ENCODE measurements at regions of chr4 and their contacts with region 1.

Region 1: GRCh38 chr4:184384056-184384809 is 90.1 kb downstream of the IRF2 start:
- DNase-seq: no peak
- ATAC-seq: peak; percentile 36
- H3K4me3 Mint-ChIP-seq: peak overlapping the region; percentile 72
- H3K27ac Mint-ChIP-seq: peak overlapping the region; percentile 79
- H3K4me1 Mint-ChIP-seq: peaks cover 88% of the 10 kb centered on the region
- H3K27me3 Mint-ChIP-seq: no peaks in the 10 kb centered on the region
- CTCF ChIP-seq: no peak

Region 2: GRCh38 chr4:183471946-183472708 is 912.1 kb before region 1 on chr4:
- CTCF ChIA-PET with region 1: no interaction called
- POLR2A ChIA-PET with region 1: no interaction called
- intact Hi-C with region 1: no loop called
- DNase-seq: peak; percentile 60
- ATAC-seq: peak; percentile 73
- H3K4me3 Mint-ChIP-seq: no peak overlapping the region
- H3K27ac Mint-ChIP-seq: no peak overlapping the region
- H3K4me1 Mint-ChIP-seq: peaks cover 2% of the 10 kb centered on the region
- H3K27me3 Mint-ChIP-seq: no peaks in the 10 kb centered on the region
- CTCF ChIP-seq: peak; percentile 67

Region 3: GRCh38 chr4:184364100-184364921 is 19.9 kb before region 1 on chr4:
- CTCF ChIA-PET with region 1: no interaction called
- POLR2A ChIA-PET with region 1: no interaction called
- intact Hi-C with region 1: loop called (anchors 2 kb)
- DNase-seq: no peak
- ATAC-seq: no peak
- H3K4me3 Mint-ChIP-seq: no peak overlapping the region
- H3K27ac Mint-ChIP-seq: no peak overlapping the region
- H3K4me1 Mint-ChIP-seq: peaks cover 26% of the 10 kb centered on the region
- H3K27me3 Mint-ChIP-seq: no peaks in the 10 kb centered on the region
- CTCF ChIP-seq: no peak

Region 4: GRCh38 chr4:184544788-184545409 is 160.7 kb after region 1 on chr4:
- CTCF ChIA-PET with region 1: no interaction called
- POLR2A ChIA-PET with region 1: no interaction called
- intact Hi-C with region 1: no loop called
- DNase-seq: no peak
- ATAC-seq: no peak
- H3K4me3 Mint-ChIP-seq: no peak overlapping the region
- H3K27ac Mint-ChIP-seq: no peak overlapping the region
- H3K4me1 Mint-ChIP-seq: peaks cover 17% of the 10 kb centered on the region
- H3K27me3 Mint-ChIP-seq: no peaks in the 10 kb centered on the region
- CTCF ChIP-seq: no peak

Region 5: GRCh38 chr4:185395956-185396723 is 1011.9 kb after region 1 on chr4:
- CTCF ChIA-PET with region 1: no interaction called
- POLR2A ChIA-PET with region 1: no interaction called
- intact Hi-C with region 1: no loop called
- DNase-seq: peak; percentile 98
- ATAC-seq: peak; percentile 89
- H3K4me3 Mint-ChIP-seq: peak overlapping the region; percentile 94
- H3K27ac Mint-ChIP-seq: peak overlapping the region; percentile 94
- H3K4me1 Mint-ChIP-seq: peaks cover 63% of the 10 kb centered on the region
- H3K27me3 Mint-ChIP-seq: no peaks in the 10 kb centered on the region
- CTCF ChIP-seq: no peak

Measured in activated B cell treated with CpG ODN at 0.5 μM for 24 hours (primary cell).